Endothelial cell of umbilical vein (primary cell): ENCODE measurements at regions of chr1 and their contacts with region 1.

Region 1: GRCh38 chr1:17059739-17060460 is 6.1 kb upstream of the SDHB start:
- DNase-seq: peak; percentile 61
- H3K4me3 ChIP-seq: no peak overlapping the region
- H3K27ac ChIP-seq: no peak overlapping the region
- H3K4me1 ChIP-seq: peaks cover 5% of the 10 kb centered on the region
- H3K27me3 ChIP-seq: no peaks in the 10 kb centered on the region
- CTCF ChIP-seq: peak; percentile 66 to 88
- POLR2A ChIP-seq: no peak

Region 2: GRCh38 chr1:17075470-17076255 is 15.8 kb after region 1 on chr1:
- CTCF ChIA-PET with region 1: interaction called, 4 read pairs
- POLR2A ChIA-PET with region 1: no interaction called
- dilution Hi-C with region 1: no loop called
- intact Hi-C with region 1: loop called (anchors 1 kb)
- DNase-seq: no peak
- H3K4me3 ChIP-seq: no peak overlapping the region
- H3K27ac ChIP-seq: no peak overlapping the region
- H3K4me1 ChIP-seq: no peaks in the 10 kb centered on the region
- H3K27me3 ChIP-seq: no peaks in the 10 kb centered on the region
- CTCF ChIP-seq: peak; percentile 22 to 24
- POLR2A ChIP-seq: no peak

Region 3: DNA sequence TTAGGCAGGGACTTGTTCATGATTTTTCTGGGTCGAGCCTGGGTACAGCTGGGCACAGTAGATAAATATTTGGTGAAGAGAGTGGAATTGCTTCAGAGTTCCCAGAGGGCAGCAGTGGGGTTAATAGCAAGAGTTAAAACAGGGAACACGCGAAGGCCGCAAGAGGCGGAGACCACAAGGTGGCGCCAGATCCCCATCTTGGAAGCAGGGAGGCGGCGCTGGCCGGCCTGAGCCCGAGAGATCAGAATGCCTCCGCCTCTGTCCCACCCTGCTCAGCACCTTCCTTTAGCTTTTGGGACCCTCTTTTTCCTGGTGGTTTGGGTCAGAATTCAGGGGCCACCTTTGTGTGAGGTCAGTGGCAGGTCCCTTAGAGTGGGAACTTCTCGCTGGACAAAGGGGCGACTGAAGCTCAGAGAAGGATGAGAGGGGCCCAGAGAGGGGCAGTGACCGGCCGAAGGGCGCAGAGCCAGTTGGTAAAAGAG is 65.9 kb after region 1 on chr1:
- CTCF ChIA-PET with region 1: interaction called, 7 read pairs
- POLR2A ChIA-PET with region 1: interaction called, 5 read pairs
- dilution Hi-C with region 1: no loop called
- intact Hi-C with region 1: loop called (anchors 1 kb)
- DNase-seq: peak; percentile 71
- H3K4me3 ChIP-seq: no peak overlapping the region
- H3K27ac ChIP-seq: no peak overlapping the region
- H3K4me1 ChIP-seq: peaks cover 30% of the 10 kb centered on the region
- H3K27me3 ChIP-seq: no peaks in the 10 kb centered on the region
- CTCF ChIP-seq: peak; percentile 93 to 96
- POLR2A ChIP-seq: no peak

Region 4: GRCh38 chr1:17141441-17142197 is 81.7 kb after region 1 on chr1:
- CTCF ChIA-PET with region 1: no interaction called
- POLR2A ChIA-PET with region 1: no interaction called
- dilution Hi-C with region 1: no loop called
- intact Hi-C with region 1: no loop called
- DNase-seq: no peak
- H3K4me3 ChIP-seq: no peak overlapping the region
- H3K27ac ChIP-seq: no peak overlapping the region
- H3K4me1 ChIP-seq: no peaks in the 10 kb centered on the region
- H3K27me3 ChIP-seq: peaks cover 2 to 17% of the 10 kb centered on the region in 2 experiments
- CTCF ChIP-seq: no peak
- POLR2A ChIP-seq: no peak

Region 5: GRCh38 chr1:17274186-17275170 is 214.6 kb after region 1 on chr1:
- CTCF ChIA-PET with region 1: interaction called, 15 read pairs
- POLR2A ChIA-PET with region 1: no interaction called
- dilution Hi-C with region 1: no loop called
- intact Hi-C with region 1: loop called (anchors 1 kb)
- DNase-seq: peak; percentile 36
- H3K4me3 ChIP-seq: no peak overlapping the region
- H3K27ac ChIP-seq: no peak overlapping the region
- H3K4me1 ChIP-seq: no peaks in the 10 kb centered on the region
- H3K27me3 ChIP-seq: no peaks in the 10 kb centered on the region
- CTCF ChIP-seq: peak; percentile 72 to 91
- POLR2A ChIP-seq: no peak

Region 6: GRCh38 chr1:17335821-17336710 is 276.2 kb after region 1 on chr1:
- CTCF ChIA-PET with region 1: interaction called, 37 read pairs
- POLR2A ChIA-PET with region 1: no interaction called
- dilution Hi-C with region 1: no loop called
- intact Hi-C with region 1: loop called (anchors 1 kb)
- DNase-seq: peak; percentile 33
- H3K4me3 ChIP-seq: no peak overlapping the region
- H3K27ac ChIP-seq: no peak overlapping the region
- H3K4me1 ChIP-seq: no peaks in the 10 kb centered on the region
- H3K27me3 ChIP-seq: no peaks in the 10 kb centered on the region
- CTCF ChIP-seq: peak; percentile 86 to 88
- POLR2A ChIP-seq: no peak

Region 7: GRCh38 chr1:17405898-17406759 is 346.2 kb after region 1 on chr1:
- CTCF ChIA-PET with region 1: interaction called, 10 read pairs
- POLR2A ChIA-PET with region 1: no interaction called
- dilution Hi-C with region 1: no loop called
- intact Hi-C with region 1: loop called (anchors 1 kb)
- DNase-seq: peak; percentile 44
- H3K4me3 ChIP-seq: no peak overlapping the region
- H3K27ac ChIP-seq: no peak overlapping the region
- H3K4me1 ChIP-seq: no peaks in the 10 kb centered on the region
- H3K27me3 ChIP-seq: no peaks in the 10 kb centered on the region
- CTCF ChIP-seq: peak; percentile 72 to 92
- POLR2A ChIP-seq: no peak